ENCODE measurements at regions of chr13 and their contacts with region 1.

Region 1: GRCh38 chr13:24982333-24982999 is 113.5 kb upstream of the PABPC3 start:
- DNase-seq: peak in 4 of 5 donors; percentile 37 to 69 (median 56)
- ATAC-seq: peak; percentile 84 to 99 (median 96)
- H3K4me3 ChIP-seq: no peak overlapping the region
- H3K27ac ChIP-seq: peak overlapping the region in 2 of 12 donors; percentile 27 to 47
- H3K4me1 ChIP-seq: peaks cover 0 to 10% (median 0%) of the 10 kb centered on the region in 12 donors
- H3K27me3 ChIP-seq: peaks cover 0 to 13% (median under 1%) of the 10 kb centered on the region in 9 donors
- CTCF ChIP-seq: no peak
- POLR2A ChIP-seq: no peak

Region 2: DNA sequence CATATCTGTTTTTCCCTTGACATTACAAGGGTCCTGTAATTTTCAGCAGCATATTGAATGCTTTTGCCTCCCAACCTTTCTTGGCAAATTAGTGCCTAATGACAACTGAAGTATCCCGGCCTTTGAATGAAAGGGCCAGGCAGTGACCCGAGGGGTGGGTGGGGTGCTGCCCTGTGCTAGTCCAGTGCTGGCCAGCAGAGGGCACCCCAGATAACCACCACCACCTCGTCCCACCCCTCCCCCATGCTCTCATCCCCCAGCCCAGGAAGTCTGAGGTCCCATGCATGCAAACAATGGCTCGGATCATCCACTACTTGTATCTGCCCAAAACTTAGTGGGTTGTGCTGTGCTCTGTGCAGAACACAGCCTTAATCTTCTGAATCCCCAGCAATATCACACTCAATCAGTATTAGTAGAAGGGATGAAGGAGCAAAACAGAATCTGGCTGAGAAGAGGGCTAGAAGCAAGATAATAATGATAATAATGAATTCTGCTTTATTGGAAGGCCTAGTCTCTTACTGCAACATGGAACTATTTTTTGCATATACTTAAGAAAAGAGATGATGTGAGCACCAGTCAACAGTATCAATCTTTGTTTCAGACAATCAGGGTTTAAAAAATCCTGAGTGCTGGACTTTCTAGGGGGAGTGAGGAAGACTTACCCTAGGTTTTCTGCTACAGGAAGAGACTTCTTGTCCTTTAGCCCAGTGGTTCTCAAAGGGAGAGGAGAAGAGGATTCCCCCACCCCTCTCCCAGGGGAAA is 298.4 kb before region 1 on chr13:
- intact Hi-C with region 1: loop called in 1 of 10 experiments (anchors 10 kb)
- DNase-seq: peak; percentile 41 to 74 (median 50)
- ATAC-seq: peak; percentile 61 to 88 (median 84)
- H3K4me3 ChIP-seq: no peak overlapping the region
- H3K27ac ChIP-seq: no peak overlapping the region
- H3K4me1 ChIP-seq: peaks cover 0 to 27% (median 15%) of the 10 kb centered on the region in 12 donors
- H3K27me3 ChIP-seq: peaks cover 12 to 29% (median 25%) of the 10 kb centered on the region in 9 donors
- CTCF ChIP-seq: peak; percentile 71 to 91 (median 80)
- POLR2A ChIP-seq: no peak

Region 3: DNA sequence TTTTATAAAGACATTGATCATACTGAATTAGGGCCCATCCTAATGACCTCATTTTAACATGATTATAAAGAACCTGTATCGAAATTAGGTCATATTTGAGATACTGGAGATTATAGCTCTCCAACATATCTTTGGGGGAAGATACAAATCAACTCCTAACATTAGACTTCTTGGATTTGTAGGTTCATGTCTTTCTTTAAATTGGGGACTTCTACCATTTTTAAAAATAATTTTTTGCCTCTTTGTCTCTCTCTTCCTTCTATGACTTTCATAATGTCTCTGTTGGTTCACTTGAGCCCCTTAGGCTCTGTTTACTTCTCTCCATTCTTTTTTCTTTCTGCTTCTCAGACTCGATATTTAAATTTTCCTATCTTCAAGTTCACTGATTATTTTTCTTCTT is 161.3 kb before region 1 on chr13:
- intact Hi-C with region 1: no loop called
- DNase-seq: no peak
- ATAC-seq: no peak
- H3K4me3 ChIP-seq: no peak overlapping the region
- H3K27ac ChIP-seq: no peak overlapping the region
- H3K4me1 ChIP-seq: no peaks in the 10 kb centered on the region
- H3K27me3 ChIP-seq: peaks cover 0 to 5% (median 0%) of the 10 kb centered on the region in 9 donors
- CTCF ChIP-seq: no peak
- POLR2A ChIP-seq: no peak

Region 4: GRCh38 chr13:24865163-24865953 is 117.1 kb before region 1 on chr13:
- intact Hi-C with region 1: loop called in 1 of 10 experiments (anchors 10 kb)
- DNase-seq: no peak
- ATAC-seq: no peak
- H3K4me3 ChIP-seq: no peak overlapping the region
- H3K27ac ChIP-seq: no peak overlapping the region
- H3K4me1 ChIP-seq: no peaks in the 10 kb centered on the region
- H3K27me3 ChIP-seq: peaks cover 0 to 12% (median 0%) of the 10 kb centered on the region in 9 donors
- CTCF ChIP-seq: peak in 4 of 12 donors; percentile 9 to 29 (median 20)
- POLR2A ChIP-seq: no peak